ENCODE measurements at regions of chr6 and their contacts with region 1.

Region 1: DNA sequence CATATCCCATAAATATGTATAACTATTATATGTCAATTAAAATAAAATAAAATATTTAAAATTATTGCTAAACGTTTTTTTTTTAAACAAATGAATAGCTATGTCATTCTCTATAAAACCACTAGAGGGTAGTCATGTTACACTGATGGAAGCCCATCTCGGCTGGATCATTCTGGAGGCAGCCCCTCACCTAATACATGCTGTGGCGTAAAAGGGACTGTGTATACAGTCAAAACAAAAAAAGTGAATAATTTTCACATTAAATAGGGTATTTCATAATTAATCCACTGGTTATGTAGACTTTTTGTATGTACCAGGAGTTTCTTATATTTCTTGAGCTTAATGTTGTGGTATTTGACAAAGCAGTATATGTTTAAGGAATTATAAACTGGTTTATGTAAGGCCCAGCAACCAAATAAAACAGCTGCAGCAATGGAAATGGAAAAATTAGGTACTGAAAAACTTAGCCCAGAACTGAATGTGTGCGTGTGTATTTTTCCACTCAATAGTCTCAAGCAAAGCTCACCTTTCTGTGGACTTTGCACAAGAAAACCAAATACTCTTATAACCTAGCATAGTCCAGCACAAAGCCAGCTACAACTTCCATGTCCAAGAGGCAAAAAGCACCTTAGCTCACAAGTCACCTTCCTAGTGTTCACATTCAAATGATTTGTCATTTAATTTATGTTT is 81.7 kb downstream of the COL9A1 start:
- DNase-seq: no peak
- H3K4me3 ChIP-seq: no peak overlapping the region
- H3K4me3 Mint-ChIP-seq: no peak overlapping the region
- H3K27ac ChIP-seq: no peak overlapping the region
- H3K27ac Mint-ChIP-seq: no peak overlapping the region
- H3K4me1 ChIP-seq: no peaks in the 10 kb centered on the region
- H3K4me1 Mint-ChIP-seq: no peaks in the 10 kb centered on the region
- H3K27me3 ChIP-seq: no peaks in the 10 kb centered on the region
- H3K27me3 Mint-ChIP-seq: peaks cover 6 to 11% of the 10 kb centered on the region in 2 donors

Region 2: GRCh38 chr6:70231311-70231710 is 10.1 kb after region 1 on chr6:
- CTCF ChIA-PET with region 1: interaction called, 15 read pairs
- POLR2A ChIA-PET with region 1: no interaction called
- DNase-seq: no peak
- H3K4me3 ChIP-seq: no peak overlapping the region
- H3K4me3 Mint-ChIP-seq: no peak overlapping the region
- H3K27ac ChIP-seq: no peak overlapping the region
- H3K27ac Mint-ChIP-seq: no peak overlapping the region
- H3K4me1 ChIP-seq: no peaks in the 10 kb centered on the region
- H3K4me1 Mint-ChIP-seq: no peaks in the 10 kb centered on the region
- H3K27me3 ChIP-seq: no peaks in the 10 kb centered on the region
- H3K27me3 Mint-ChIP-seq: peaks cover 0 to 4% of the 10 kb centered on the region in 2 donors

Region 3: GRCh38 chr6:70241991-70242420 is 20.8 kb after region 1 on chr6:
- CTCF ChIA-PET with region 1: no interaction called
- POLR2A ChIA-PET with region 1: no interaction called
- DNase-seq: no peak
- H3K4me3 ChIP-seq: no peak overlapping the region
- H3K4me3 Mint-ChIP-seq: no peak overlapping the region
- H3K27ac ChIP-seq: no peak overlapping the region
- H3K27ac Mint-ChIP-seq: no peak overlapping the region
- H3K4me1 ChIP-seq: no peaks in the 10 kb centered on the region
- H3K4me1 Mint-ChIP-seq: no peaks in the 10 kb centered on the region
- H3K27me3 ChIP-seq: no peaks in the 10 kb centered on the region
- H3K27me3 Mint-ChIP-seq: peaks cover 0 to 8% of the 10 kb centered on the region in 2 donors

Region 4: DNA sequence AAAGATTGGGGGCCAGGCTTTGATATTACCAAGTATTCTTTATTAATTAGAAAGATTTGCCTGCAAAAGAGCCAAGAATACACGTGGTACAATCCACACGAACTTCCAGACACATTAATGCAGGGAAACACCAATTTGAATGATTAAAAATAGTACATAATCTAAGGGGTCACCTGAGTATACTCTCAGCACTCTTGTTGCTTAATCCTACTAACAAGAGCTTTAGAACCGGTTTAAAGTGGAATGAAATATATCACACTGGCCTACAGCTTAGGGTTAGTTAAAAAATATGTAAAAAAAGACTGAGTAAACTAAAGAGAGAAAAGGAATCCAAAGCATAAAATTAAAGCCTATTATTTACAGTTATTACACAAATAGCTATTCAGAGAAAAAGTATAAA is 32.8 kb after region 1 on chr6:
- CTCF ChIA-PET with region 1: no interaction called
- POLR2A ChIA-PET with region 1: no interaction called
- DNase-seq: no peak
- H3K4me3 ChIP-seq: no peak overlapping the region
- H3K4me3 Mint-ChIP-seq: no peak overlapping the region
- H3K27ac ChIP-seq: no peak overlapping the region
- H3K27ac Mint-ChIP-seq: no peak overlapping the region
- H3K4me1 ChIP-seq: no peaks in the 10 kb centered on the region
- H3K4me1 Mint-ChIP-seq: no peaks in the 10 kb centered on the region
- H3K27me3 ChIP-seq: no peaks in the 10 kb centered on the region
- H3K27me3 Mint-ChIP-seq: peaks cover 0 to 12% of the 10 kb centered on the region in 2 donors

Region 5: GRCh38 chr6:70369332-70369950 is 148.3 kb after region 1 on chr6:
- CTCF ChIA-PET with region 1: interaction called, 10 read pairs
- POLR2A ChIA-PET with region 1: no interaction called
- DNase-seq: peak; percentile 33 to 63 (median 48)
- H3K4me3 ChIP-seq: no peak overlapping the region
- H3K4me3 Mint-ChIP-seq: no peak overlapping the region
- H3K27ac ChIP-seq: no peak overlapping the region
- H3K27ac Mint-ChIP-seq: no peak overlapping the region
- H3K4me1 ChIP-seq: no peaks in the 10 kb centered on the region
- H3K4me1 Mint-ChIP-seq: no peaks in the 10 kb centered on the region
- H3K27me3 ChIP-seq: no peaks in the 10 kb centered on the region
- H3K27me3 Mint-ChIP-seq: peaks cover 1 to 21% of the 10 kb centered on the region in 2 donors

Region 6: GRCh38 chr6:70884074-70884983 is 663.2 kb after region 1 on chr6:
- CTCF ChIA-PET with region 1: interaction called, 10 read pairs
- POLR2A ChIA-PET with region 1: no interaction called
- DNase-seq: peak; percentile 21 to 64 (median 43)
- H3K4me3 ChIP-seq: no peak overlapping the region
- H3K4me3 Mint-ChIP-seq: no peak overlapping the region
- H3K27ac ChIP-seq: no peak overlapping the region
- H3K27ac Mint-ChIP-seq: no peak overlapping the region
- H3K4me1 ChIP-seq: no peaks in the 10 kb centered on the region
- H3K4me1 Mint-ChIP-seq: no peaks in the 10 kb centered on the region
- H3K27me3 ChIP-seq: no peaks in the 10 kb centered on the region
- H3K27me3 Mint-ChIP-seq: peaks cover 7 to 44% of the 10 kb centered on the region in 2 donors